ENCODE measurements at regions of chr20 and their contacts with region 1.

Region 1: GRCh38 chr20:34076952-34077351 is 35.1 kb downstream of the EIF2S2 start:
- DNase-seq: no peak
- CTCF ChIP-seq: no peak

Region 2: DNA sequence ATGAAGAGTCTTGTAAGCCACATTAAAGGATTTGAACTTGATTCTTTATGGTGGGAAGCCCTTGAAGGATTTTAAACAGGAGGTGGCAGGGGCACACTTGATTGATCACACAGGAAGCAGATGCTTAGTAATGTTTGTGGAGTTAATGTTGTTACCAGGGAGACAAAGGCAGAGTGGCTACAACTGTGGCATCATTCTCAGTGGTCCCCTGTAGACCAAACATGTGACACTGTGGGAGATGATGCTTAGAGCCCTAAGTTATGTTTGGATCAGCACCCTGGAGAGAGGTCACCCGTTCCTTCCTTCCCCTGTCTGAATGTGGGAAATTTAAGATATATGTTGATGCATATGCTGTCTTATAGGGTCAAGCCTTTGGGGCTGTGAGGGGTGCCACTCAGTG is 18.1 kb before region 1 on chr20:
- CTCF ChIA-PET with region 1: interaction called, 13 read pairs
- POLR2A ChIA-PET with region 1: no interaction called
- DNase-seq: no peak
- CTCF ChIP-seq: no peak